Activated naive CD4-positive, alpha-beta T cell treated with anti-CD3 and anti-CD28 coated beads, Interleukin-2, amount 10 ng/mL, durations not matched to agents 7 days and 5 days (primary cell): ENCODE measurements at regions of chr11 and their contacts with region 1.

Region 1: DNA sequence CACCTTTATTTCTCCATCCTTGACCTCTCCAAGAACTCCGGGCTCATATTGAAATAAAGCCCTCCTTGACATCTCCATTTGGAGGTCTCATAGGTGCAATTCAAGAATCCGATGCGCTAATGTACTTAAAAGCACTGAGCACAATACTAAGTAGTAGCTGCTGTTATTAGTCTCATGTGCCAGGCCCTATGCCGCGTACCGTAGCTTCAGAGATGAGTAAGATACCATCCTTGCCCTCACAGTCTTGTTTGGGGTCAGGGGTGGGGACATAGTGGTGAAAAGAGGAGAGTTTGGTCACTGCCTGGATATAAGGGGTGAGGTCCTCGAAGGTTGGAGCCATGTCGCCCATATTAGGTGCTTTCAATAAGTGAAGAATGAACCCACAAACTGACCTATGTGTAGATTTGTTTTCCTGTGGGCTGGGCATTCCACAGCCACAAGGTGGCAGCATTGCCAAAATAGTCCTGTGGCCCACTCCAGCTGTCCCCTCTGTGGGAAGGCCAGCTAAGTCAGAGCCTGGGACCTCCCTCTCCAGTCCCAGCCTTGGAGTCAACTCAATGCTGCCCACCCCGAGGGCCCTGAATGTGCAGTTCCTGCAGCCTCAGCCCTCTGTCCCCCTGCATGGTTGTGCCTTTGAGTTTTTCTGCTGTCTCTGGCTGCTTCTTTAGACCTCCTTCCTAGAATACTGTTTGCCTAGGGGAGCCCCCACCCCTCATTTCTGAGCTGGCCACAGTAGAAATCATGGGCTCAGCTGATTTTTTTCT is 6.5 kb downstream of the DCPS start:
- DNase-seq: peak; percentile 68
- H3K4me3 Mint-ChIP-seq: no peak overlapping the region
- H3K27ac Mint-ChIP-seq: peak overlapping the region; percentile 54
- H3K4me1 Mint-ChIP-seq: peaks cover 27% of the 10 kb centered on the region
- H3K27me3 Mint-ChIP-seq: no peaks in the 10 kb centered on the region

Region 2: GRCh38 chr11:126355324-126355925 is 45.0 kb after region 1 on chr11 and contains the start of gene ST3GAL4:
- CTCF ChIA-PET with region 1: interaction called, 25 read pairs
- DNase-seq: peak; percentile 79
- H3K4me3 Mint-ChIP-seq: peak within 1 kb of the TSS; percentile 89
- H3K27ac Mint-ChIP-seq: peak within 1 kb of the TSS; percentile 79
- H3K4me1 Mint-ChIP-seq: peaks cover 44% of the 10 kb centered on the region
- H3K27me3 Mint-ChIP-seq: no peaks in the 10 kb centered on the region

Region 3: GRCh38 chr11:126440792-126441514 is 130.5 kb after region 1 on chr11:
- CTCF ChIA-PET with region 1: interaction called, 30 read pairs
- DNase-seq: peak; percentile 80
- H3K4me3 Mint-ChIP-seq: no peak overlapping the region
- H3K27ac Mint-ChIP-seq: no peak overlapping the region
- H3K4me1 Mint-ChIP-seq: peaks cover 8% of the 10 kb centered on the region
- H3K27me3 Mint-ChIP-seq: peaks cover 37% of the 10 kb centered on the region